ENCODE measurements at regions of chr3 and their contacts with region 1.

Region 1: GRCh38 chr3:157088601-157089454 is 71.1 kb downstream of the CCNL1 start:
- DNase-seq: peak; percentile 94
- H3K4me3 Mint-ChIP-seq: peak overlapping the region; percentile 80
- H3K27ac Mint-ChIP-seq: peak overlapping the region; percentile 94
- H3K4me1 Mint-ChIP-seq: peaks cover 70% of the 10 kb centered on the region
- H3K27me3 Mint-ChIP-seq: no peaks in the 10 kb centered on the region

Region 2: DNA sequence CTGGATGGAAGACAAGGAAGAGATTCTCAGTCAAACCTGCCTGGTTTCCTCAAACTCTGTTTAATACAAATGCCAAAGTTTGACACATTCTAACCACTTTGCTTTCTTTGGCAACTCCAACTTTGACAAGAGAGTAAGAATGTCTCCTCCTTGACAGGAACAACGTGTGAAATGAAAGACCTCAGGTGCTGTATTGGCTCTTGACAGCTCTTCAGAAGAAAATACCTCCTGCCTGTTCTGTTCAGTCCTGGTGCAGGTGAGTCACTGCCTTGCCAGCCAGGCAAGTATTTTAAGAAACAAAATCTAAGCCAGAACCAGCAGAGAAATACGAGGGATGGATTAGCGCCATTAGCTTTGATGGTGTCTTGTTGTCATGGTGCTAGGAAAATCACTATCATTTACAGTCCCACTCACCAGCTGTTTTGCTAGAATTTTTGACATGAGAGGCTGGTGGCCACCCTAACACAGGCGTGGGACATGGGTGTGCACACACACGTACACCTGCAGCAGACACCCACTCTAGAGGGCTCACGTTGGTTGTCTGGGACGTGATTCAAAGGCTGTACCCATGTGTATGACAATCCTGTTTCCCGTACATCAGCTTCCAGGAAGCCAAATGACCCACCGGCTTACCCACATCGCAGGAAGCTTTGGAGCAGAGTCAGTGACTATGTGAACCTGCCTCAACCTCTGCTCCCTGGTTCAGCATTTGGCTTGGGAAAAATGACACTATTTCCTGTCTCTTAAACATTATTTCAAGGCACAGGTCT is 10.7 kb after region 1 on chr3:
- CTCF ChIA-PET with region 1: interaction called, 19 read pairs
- POLR2A ChIA-PET with region 1: interaction called, 3 read pairs
- DNase-seq: no peak
- H3K4me3 Mint-ChIP-seq: no peak overlapping the region
- H3K27ac Mint-ChIP-seq: peak overlapping the region; percentile 46
- H3K4me1 Mint-ChIP-seq: peaks cover 46% of the 10 kb centered on the region
- H3K27me3 Mint-ChIP-seq: no peaks in the 10 kb centered on the region

Region 3: GRCh38 chr3:157159762-157160657 is 71.2 kb after region 1 on chr3 and contains the start of gene CCNL1:
- CTCF ChIA-PET with region 1: no interaction called
- POLR2A ChIA-PET with region 1: no interaction called
- DNase-seq: peak; percentile 95
- H3K4me3 Mint-ChIP-seq: peak within 1 kb of the TSS; percentile 97
- H3K27ac Mint-ChIP-seq: peak within 1 kb of the TSS; percentile 100
- H3K4me1 Mint-ChIP-seq: peaks cover 56% of the 10 kb centered on the region
- H3K27me3 Mint-ChIP-seq: no peaks in the 10 kb centered on the region
- total RNA-seq, gene CCNL1: 220 to 258 TPM

Measured in activated CD4-positive, alpha-beta T cell treated with anti-CD3 and anti-CD28 coated beads, Interleukin-2, amount 10 ng/mL, durations not matched to agents 7 days and 5 days (primary cell).